ENCODE measurements at regions of chr18 and their contacts with region 1.

Region 1: DNA sequence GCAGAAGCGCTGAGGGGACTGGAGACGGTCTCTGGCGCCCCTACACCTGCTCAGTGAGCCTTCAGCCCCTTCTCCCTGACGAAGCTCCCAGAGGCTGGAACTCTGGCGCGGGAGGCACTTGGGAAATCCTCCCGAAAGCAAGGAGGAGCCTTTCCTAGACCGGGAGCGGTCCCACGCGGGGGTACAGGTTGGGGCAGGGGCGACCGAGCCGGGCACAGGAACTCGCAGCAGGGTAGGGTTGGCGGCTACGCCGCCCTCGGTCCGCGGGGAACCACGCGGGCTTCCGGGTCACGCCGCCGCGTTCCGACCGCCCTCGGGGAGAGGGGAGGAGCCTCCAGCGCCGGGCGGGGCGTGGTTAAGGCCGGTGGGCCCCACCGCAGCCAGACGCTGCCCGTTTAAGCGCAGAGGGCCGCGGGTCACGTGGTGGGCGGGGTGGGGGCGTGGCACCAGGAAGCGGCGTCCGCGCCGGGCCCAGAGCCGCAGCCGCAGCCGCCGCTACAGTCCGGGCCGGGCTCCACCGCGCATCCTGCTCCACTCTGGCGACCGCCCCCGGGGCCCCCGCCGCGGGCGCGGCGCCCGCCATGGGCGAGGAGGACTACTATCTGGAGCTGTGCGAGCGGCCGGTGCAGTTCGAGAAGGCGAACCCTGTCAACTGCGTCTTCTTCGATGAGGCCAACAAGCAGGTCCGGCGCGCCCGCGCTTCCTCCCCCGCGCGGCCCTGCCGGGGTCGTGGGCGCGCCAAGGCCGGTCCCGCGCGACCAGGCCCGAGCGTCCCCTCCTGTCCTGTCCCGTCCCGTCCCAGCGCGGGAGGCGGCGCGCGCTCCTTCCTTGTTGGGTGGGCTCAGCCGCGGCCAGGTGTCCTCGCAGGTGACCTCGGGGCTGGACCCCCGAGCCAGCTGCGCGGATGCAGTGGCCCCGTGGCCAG is at the start of gene RMC1:
- DNase-seq: peak; percentile 96
- H3K4me3 ChIP-seq: peak within 1 kb of the TSS; percentile 96
- H3K27ac ChIP-seq: peak within 1 kb of the TSS; percentile 72
- H3K4me1 ChIP-seq: peaks cover 40% of the 10 kb centered on the region
- CTCF ChIP-seq: peak; percentile 58
- total RNA-seq, gene RMC1: 28.4 and 32.8 TPM in 2 replicates

Region 2: DNA sequence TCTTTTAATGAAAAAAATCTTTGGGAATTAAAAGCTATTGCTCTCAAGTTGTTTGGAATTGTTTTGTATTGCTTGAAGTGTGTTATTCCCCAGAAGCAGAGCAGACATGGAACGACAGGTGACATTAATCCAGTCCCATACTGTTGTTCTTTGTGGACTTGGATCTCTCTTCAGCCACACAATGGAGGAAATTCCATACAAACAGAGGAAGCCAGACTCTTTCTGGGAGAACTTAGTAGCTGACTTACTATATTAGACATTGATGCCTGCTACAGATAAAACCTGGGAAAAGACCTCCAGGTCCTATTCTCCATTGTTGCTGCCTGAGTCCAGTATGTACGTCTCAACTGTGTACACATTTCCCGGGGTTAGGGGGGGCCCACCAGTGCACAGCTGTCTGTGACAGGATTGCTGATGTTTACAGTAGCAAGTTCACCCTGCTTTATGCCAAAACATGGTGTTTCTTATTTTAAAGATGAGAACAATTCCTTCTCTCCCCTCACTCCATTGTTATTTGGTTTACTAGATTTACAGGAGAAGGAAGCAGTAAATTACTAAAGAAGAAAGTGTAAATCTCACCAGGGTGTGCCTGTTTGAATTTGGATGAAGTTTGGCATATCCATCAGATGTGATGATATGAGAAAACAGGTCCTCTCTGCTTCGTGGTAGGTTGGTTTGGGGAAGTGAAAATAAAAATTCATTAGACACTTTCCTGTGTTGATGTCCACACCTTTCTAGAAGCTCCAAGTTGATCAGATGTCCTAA is 712.6 kb before region 1 on chr18:
- CTCF ChIA-PET with region 1: no interaction called
- POLR2A ChIA-PET with region 1: no interaction called
- intact Hi-C with region 1: loop called (anchors 10 kb)
- DNase-seq: peak; percentile 21
- H3K4me3 ChIP-seq: no peak overlapping the region
- H3K27ac ChIP-seq: no peak overlapping the region
- H3K4me1 ChIP-seq: peaks cover 17% of the 10 kb centered on the region
- CTCF ChIP-seq: no peak

Region 3: GRCh38 chr18:23257811-23258565 is 245.3 kb before region 1 on chr18:
- CTCF ChIA-PET with region 1: no interaction called
- POLR2A ChIA-PET with region 1: no interaction called
- intact Hi-C with region 1: no loop called
- DNase-seq: no peak
- H3K4me3 ChIP-seq: no peak overlapping the region
- H3K27ac ChIP-seq: no peak overlapping the region
- H3K4me1 ChIP-seq: peaks cover 29% of the 10 kb centered on the region
- CTCF ChIP-seq: no peak

Region 4: GRCh38 chr18:23416298-23416697 is 87.0 kb before region 1 on chr18:
- CTCF ChIA-PET with region 1: no interaction called
- POLR2A ChIA-PET with region 1: no interaction called
- intact Hi-C with region 1: loop called (anchors 1 kb)
- DNase-seq: no peak
- H3K4me3 ChIP-seq: no peak overlapping the region
- H3K27ac ChIP-seq: no peak overlapping the region
- H3K4me1 ChIP-seq: peaks cover 23% of the 10 kb centered on the region
- CTCF ChIP-seq: no peak

Region 5: GRCh38 chr18:23452728-23453679 is 50.3 kb before region 1 on chr18 and contains the start of gene RIOK3:
- CTCF ChIA-PET with region 1: interaction called, 6 read pairs
- POLR2A ChIA-PET with region 1: no interaction called
- intact Hi-C with region 1: loop called (anchors 2 kb)
- DNase-seq: peak; percentile 96
- H3K4me3 ChIP-seq: peak within 1 kb of the TSS; percentile 87
- H3K27ac ChIP-seq: peak within 1 kb of the TSS; percentile 22
- H3K4me1 ChIP-seq: peaks cover 17% of the 10 kb centered on the region
- CTCF ChIP-seq: no peak
- total RNA-seq, gene RIOK3: 18.1 and 26.6 TPM in 2 replicates

Region 6: DNA sequence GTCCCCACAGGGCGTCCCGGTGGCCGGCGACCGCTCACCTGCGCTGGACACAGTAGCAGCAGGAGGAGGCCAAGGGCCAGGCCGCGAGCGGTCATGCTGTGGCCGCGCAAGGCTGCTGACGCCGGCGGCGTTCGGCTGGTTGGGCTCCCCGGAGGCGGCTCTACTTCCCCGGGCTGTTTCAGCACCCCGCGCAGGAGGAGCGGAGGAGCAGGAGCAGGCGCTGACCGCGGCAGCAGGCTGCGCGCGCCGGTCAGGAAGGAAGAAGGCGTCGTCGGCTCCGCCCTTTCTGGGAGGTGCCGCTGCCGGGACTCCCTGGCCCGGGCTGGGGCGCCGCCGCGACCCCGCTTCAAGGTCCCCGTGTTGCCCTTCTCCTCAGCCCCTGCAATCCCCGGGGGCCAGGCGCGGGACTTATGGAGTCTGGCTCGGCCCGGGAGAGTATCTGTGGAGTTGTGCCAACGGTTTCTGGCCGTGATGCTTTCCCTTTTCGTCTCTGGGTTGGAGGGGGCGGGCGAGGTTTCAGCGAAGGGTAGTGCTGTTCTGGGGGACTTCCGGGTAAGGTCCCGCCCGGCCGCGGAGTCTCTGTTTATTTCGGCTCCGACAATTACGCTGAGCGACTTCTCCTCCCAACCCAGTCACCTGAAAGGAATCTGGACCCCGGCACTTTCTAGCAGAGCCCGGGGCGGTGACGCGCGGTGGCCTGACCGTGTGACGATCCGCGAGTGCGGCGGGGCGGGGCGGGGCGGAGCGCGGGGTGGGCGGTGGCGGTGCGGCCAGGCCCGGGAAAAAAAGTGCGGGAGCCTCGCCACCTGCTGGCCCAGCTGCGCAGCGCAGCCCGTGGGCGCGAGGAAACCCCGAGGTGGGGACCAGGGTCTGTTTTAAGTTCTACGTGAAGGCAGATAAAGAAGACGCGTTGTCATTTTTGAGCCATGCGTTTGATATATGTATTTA is 83.2 kb after region 1 on chr18 and contains the start of gene NPC1:
- CTCF ChIA-PET with region 1: interaction called, 4 read pairs
- POLR2A ChIA-PET with region 1: interaction called, 4 read pairs
- intact Hi-C with region 1: loop called (anchors 1 kb)
- DNase-seq: peak; percentile 94
- H3K4me3 ChIP-seq: peak within 1 kb of the TSS; percentile 87
- H3K27ac ChIP-seq: peak within 1 kb of the TSS; percentile 85
- H3K4me1 ChIP-seq: peaks cover 22% of the 10 kb centered on the region
- CTCF ChIP-seq: peak; percentile 84
- total RNA-seq, gene NPC1: 22.3 and 26.0 TPM in 2 replicates

Region 7: DNA sequence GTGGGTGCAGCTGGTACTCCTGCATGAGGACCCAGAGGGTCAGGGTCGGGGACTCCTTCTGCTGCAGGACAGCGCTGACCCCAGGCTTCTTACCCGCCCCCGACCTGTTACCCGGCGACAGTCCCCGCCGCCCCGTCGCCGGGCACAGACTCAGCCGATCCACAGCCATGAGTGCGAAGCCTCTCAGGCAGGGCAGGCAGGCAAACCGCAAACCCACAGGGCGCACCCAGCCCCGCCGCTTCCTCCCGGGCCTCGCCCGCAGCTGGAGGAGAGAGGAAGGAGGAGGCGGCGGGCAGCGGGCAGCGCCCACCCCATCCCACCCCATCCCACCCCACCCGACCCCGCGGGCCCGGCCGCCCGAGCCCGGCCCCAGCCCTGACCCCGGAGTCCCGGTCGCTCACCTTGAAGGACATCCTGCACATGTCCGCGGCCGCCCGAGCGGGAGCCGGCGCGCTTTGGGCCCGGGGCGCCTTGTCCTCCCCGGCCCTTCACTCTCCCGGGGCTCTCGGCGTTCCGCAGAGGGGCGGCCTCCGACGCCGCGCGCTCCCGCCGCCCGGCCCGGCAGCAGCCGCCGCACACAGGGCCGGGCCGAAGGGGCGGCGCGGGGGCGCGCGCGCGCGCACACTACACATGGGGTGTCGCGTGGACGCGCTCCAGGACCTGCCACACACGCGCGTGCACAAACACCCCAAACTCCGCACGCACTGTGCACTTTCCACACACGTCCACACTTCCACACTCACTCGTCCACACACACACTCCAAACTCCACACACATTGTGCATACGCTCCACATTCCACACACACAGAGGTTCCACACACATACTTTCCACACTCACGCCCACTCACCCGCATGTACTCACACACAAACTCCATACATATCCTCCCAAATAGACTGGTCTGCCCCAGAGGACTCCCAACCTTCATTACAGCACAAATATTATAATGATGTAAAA is 159.3 kb after region 1 on chr18 and contains the start of gene ANKRD29:
- CTCF ChIA-PET with region 1: no interaction called
- POLR2A ChIA-PET with region 1: no interaction called
- intact Hi-C with region 1: no loop called
- DNase-seq: no peak
- H3K4me3 ChIP-seq: no peak within 1 kb of the TSS
- H3K27ac ChIP-seq: no peak within 1 kb of the TSS
- H3K4me1 ChIP-seq: no peaks in the 10 kb centered on the region
- CTCF ChIP-seq: no peak
- total RNA-seq, gene ANKRD29: not detected in 2 replicates